ENCODE measurements at regions of chr9 and their contacts with region 1.

Region 1: DNA sequence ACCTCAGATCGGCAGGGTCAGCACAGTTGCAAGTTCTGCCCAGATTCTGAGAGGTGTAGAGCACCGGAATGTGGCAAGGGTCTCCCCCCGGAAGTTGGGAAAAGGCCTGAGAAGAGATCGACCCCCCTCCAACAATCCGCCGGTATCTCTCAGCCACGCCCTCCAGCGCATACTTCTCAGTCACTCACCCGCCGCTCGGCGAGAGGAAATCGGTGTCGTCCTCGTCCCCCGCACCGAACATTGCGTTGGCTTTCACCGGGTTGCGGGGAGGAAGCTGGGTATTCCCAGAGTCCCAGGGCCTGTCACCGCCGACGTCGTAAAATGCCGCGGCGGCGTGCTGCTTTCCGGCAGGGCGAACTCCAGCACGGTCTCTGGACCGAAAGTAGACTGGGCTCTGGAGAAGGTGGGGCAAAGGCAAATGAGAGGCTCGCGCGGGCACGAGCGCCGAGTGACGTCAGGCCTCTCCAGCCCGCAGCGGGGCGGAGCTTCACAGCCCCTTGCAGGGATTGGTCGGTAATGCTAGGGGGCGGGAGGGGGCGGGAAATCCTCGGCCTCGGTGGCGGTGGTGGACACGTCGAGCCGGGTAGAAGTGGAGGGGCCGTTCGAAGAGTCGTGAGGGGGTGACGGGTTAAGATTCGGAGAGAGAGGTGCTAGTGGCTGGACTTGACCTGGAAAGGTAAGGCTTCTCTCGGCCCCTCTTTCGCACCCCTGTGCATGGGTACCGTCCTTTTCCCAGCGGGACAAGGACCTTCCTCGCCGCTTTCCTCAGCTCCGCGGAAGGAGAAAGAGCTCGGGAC is at the starts of genes FKBP15 and SLC31A1:
- DNase-seq: peak; percentile 97
- H3K4me3 ChIP-seq: peak within 1 kb of the TSS; percentile 91
- H3K27ac ChIP-seq: peak within 1 kb of the TSS; percentile 39
- H3K27me3 ChIP-seq: no peaks in the 10 kb centered on the region
- CTCF ChIP-seq: no peak
- polyA plus RNA-seq, gene FKBP15: 27.8 and 28.5 TPM in 2 replicates
- polyA plus RNA-seq, gene SLC31A1: 34.6 and 38.4 TPM in 2 replicates

Region 2: GRCh38 chr9:113187935-113188595 is 33.1 kb before region 1 on chr9:
- CTCF ChIA-PET with region 1: no interaction called
- POLR2A ChIA-PET with region 1: interaction called, 11 read pairs
- DNase-seq: peak; percentile 76
- H3K4me3 ChIP-seq: no peak overlapping the region
- H3K27ac ChIP-seq: peak overlapping the region; percentile 89
- H3K27me3 ChIP-seq: no peaks in the 10 kb centered on the region
- CTCF ChIP-seq: no peak

Region 3: DNA sequence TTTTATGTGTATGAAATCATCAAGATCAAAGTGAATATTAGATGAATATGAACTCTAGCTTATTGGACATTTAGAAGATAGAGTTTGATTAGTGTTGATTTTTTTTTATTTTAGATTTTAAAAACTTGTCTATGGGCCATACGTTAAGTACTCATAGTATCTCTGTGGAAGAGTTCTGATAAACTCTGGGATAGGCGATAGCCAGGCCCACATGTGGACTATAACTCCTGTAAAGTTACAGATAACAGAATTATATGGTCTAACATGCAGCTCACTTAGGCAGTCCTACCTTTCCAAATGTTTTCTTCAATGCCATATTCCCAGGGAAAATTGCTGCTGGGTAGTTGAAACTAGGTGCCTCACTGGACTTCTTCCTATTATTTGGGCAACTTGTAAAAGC is 10.5 kb after region 1 on chr9:
- CTCF ChIA-PET with region 1: interaction called, 6 read pairs
- POLR2A ChIA-PET with region 1: interaction called, 15 read pairs
- DNase-seq: no peak
- H3K4me3 ChIP-seq: no peak overlapping the region
- H3K27ac ChIP-seq: no peak overlapping the region
- H3K27me3 ChIP-seq: no peaks in the 10 kb centered on the region
- CTCF ChIP-seq: no peak